ENCODE measurements at regions of chr18 and their contacts with region 1.

Region 1: DNA sequence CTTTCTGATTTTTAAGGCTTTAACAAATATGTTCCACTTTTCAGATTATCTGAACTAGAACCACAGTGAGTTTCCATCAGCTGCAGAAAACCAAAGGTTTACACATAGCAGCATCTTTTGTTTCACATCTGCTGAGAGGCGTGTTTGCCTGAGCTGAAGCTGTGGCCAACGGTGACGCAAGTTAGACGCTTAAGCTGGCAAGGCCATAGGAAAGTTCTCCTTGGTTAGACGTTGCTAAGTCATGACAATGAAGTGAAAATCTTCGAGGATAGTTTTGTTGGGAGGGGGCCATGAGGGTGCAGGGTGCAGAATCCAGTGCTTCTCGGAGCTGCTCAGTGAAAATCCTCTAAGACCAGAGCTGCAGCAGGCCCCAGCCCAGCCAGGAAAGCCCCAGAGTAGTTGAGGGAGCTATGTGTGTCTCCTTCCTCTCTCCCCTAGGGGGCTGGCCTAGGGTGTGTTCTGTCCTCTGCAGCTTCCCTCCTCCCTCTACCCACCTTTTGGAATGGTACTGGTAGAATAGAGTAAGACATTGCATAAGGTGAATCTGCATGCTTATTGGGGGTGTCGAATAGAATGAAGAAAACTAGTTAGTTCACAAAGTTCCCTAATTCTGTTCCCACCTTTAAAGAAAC is 105.4 kb downstream of the FHOD3 start:
- DNase-seq: no peak
- ATAC-seq: peak; percentile 70
- H3K4me3 ChIP-seq: no peak overlapping the region
- H3K27ac ChIP-seq: no peak overlapping the region
- H3K4me1 ChIP-seq: no peaks in the 10 kb centered on the region
- H3K27me3 ChIP-seq: no peaks in the 10 kb centered on the region
- CTCF ChIP-seq: peak in 2 of 3 experiments; percentile 3 to 25; a peak in 3 of 6 replicates
- EP300 ChIP-seq: no peak
- POLR2A ChIP-seq: no peak
- RAD21 ChIP-seq: no peak

Region 2: GRCh38 chr18:35322486-35323458 is 1080.1 kb before region 1 on chr18:
- CTCF ChIA-PET with region 1: no interaction called
- POLR2A ChIA-PET with region 1: no interaction called
- RAD21 ChIA-PET with region 1: no interaction called
- SMC1A ChIA-PET with region 1: no interaction called
- in situ Hi-C with region 1: no loop called
- intact Hi-C with region 1: no loop called
- DNase-seq: no peak
- ATAC-seq: no peak
- H3K4me3 ChIP-seq: no peak overlapping the region
- H3K27ac ChIP-seq: no peak overlapping the region
- H3K4me1 ChIP-seq: no peaks in the 10 kb centered on the region
- H3K27me3 ChIP-seq: no peaks in the 10 kb centered on the region
- CTCF ChIP-seq: no peak
- EP300 ChIP-seq: no peak
- POLR2A ChIP-seq: no peak
- RAD21 ChIP-seq: no peak

Region 3: GRCh38 chr18:36372903-36373311 is 30.0 kb before region 1 on chr18:
- CTCF ChIA-PET with region 1: interaction called, 15 read pairs
- POLR2A ChIA-PET with region 1: interaction called, 8 read pairs
- RAD21 ChIA-PET with region 1: interaction called, 19 read pairs
- SMC1A ChIA-PET with region 1: interaction called, 1,180 read pairs
- in situ Hi-C with region 1: no loop called
- intact Hi-C with region 1: no loop called
- DNase-seq: no peak
- ATAC-seq: peak; percentile 57
- H3K4me3 ChIP-seq: no peak overlapping the region
- H3K27ac ChIP-seq: no peak overlapping the region
- H3K4me1 ChIP-seq: no peaks in the 10 kb centered on the region; the same call in 1 of the 2 replicates
- H3K27me3 ChIP-seq: no peaks in the 10 kb centered on the region
- CTCF ChIP-seq: peak; percentile 16 to 33 (median 32); a peak in 3 of 6 replicates
- EP300 ChIP-seq: no peak
- POLR2A ChIP-seq: no peak
- RAD21 ChIP-seq: peak; percentile 53; the same call in 1 of the 2 replicates

Measured in GM12878 (cell line).